AG04449 (cell line): ENCODE measurements at regions of chr20 and their contacts with region 1.

Region 1: DNA sequence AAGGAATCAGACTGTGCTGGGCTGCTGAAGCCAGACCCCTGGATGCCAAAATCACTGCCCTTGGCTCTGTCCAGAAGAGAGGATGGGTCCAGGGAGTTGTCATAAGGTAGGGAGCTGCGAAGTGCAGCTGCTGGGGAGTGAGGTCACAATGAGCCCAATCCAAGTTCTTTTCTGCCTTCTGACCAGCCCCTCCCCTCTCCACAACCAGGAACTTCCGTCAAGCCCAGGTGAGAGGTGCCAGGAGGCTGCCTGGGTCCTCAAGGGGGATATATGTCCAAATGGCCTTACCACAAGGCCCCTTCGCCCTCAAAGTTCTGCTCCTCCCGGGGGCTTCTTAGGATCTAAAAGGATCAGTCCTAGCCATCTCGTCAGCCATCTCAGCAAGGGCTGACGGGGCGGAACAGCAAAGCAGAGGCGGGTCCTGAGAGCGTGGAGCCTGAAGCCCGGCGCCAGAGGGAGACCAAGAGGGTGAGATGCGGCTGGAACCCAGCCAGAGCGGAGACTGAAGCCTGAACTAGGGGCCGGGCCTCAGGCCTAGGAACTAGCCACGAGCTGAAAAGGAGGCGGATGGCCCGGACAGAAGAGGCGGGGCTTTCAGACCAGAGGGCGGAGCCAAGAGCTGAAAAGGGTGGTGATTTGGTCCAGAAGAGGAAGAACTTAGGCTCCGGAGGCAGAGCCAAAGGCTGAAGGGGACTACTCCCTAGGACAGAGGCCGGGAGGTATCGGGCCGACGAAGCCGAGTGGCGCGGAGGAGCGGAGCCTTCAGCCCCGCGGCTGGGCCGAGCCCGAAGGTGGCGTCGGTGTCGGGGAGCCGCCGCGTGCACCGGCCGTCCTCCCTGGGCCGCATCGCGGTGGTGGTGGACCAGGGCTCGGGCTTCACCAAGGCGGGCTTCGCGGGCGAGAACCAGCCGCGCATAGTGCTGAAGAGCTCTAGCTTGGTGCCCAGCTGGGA is at the start of gene ACTL10:
- DNase-seq: peak; percentile 79
- H3K4me3 ChIP-seq: peak within 1 kb of the TSS; percentile 58
- CTCF ChIP-seq: peak; percentile 66

Region 2: DNA sequence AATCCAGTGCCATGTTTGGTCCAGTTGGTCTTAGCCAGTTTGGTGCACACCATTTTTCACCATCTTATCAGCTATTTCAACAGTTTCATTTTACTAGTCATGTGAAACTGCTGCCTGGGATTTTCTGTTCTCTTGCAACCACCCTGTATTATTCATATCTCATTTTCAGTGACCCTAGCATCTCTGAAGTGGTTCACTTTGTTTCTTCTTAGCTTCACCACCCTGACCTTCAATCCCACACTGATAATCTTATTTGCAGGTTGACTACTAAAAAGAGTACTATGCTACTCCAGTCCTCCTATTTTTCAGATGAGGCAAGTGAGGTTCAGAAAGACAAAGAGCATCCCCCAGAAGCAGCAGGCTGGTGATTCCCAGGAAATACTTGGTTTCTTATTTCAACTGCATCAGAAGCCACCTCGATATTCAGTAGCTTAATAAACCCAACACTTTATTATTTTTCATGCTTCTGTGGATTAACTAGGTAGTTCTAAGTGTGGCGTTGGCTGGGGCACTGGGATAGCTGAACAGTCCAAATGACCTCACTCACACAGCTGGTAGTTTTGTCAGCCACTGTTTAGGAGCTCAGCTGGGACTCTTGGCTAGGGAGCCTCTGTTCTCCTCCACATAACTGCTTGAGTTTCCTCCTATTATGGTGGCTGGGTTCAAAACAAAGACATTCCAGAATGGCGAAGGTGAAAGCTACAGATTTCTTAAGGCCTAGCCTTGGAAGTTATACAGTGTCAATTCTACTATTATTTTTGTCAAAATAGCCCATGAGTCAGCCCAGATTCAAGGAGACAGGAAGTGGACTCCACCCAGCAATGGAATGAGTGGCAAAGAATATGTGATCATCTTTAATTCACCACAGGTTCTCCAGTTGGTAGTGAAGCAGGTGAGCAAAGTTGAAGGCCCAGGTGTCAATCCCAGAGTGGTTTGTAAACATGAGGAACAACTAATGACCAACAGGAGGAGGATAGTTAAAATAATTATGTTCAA is 546.5 kb before region 1 on chr20:
- CTCF ChIA-PET with region 1: no interaction called
- POLR2A ChIA-PET with region 1: no interaction called
- DNase-seq: no peak
- H3K4me3 ChIP-seq: no peak overlapping the region
- CTCF ChIP-seq: no peak

Region 3: GRCh38 chr20:33415948-33416347 is 250.6 kb before region 1 on chr20:
- CTCF ChIA-PET with region 1: interaction called, 12 read pairs
- POLR2A ChIA-PET with region 1: no interaction called
- DNase-seq: no peak
- H3K4me3 ChIP-seq: no peak overlapping the region
- CTCF ChIP-seq: peak; percentile 45

Region 4: DNA sequence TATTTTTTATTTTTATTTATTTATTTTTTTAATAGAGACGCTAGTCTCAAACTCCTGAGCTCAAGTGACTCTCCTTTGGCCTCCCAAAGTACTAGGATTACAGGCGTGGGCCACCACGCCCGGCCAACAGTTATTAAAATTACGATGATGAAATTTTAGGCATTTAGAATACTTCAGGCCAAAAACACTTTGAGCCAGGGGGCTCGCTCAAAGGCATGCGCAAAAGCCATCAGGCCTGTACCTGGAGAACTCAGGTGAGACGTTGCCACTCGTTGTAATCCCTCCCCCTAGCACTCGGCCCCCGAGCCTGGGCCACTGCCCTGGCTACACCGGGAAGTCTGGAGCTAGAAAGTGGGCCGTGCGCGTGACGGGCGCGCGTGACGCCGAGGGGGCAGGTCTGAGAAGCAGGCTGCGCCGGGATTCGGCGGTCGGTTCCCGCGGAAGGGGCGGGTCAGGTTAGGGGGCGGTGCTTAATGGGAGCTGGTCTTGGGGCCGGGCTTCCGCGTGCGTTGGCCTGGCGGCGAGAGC is 177.0 kb before region 1 on chr20:
- CTCF ChIA-PET with region 1: interaction called, 11 read pairs
- POLR2A ChIA-PET with region 1: interaction called, 3 read pairs
- DNase-seq: peak; percentile 69
- H3K4me3 ChIP-seq: peak overlapping the region; percentile 72
- CTCF ChIP-seq: no peak

Region 5: GRCh38 chr20:33679758-33680485 is 13.4 kb after region 1 on chr20:
- CTCF ChIA-PET with region 1: interaction called, 40 read pairs
- POLR2A ChIA-PET with region 1: interaction called, 10 read pairs
- DNase-seq: no peak
- H3K4me3 ChIP-seq: no peak overlapping the region
- CTCF ChIP-seq: no peak

Region 6: DNA sequence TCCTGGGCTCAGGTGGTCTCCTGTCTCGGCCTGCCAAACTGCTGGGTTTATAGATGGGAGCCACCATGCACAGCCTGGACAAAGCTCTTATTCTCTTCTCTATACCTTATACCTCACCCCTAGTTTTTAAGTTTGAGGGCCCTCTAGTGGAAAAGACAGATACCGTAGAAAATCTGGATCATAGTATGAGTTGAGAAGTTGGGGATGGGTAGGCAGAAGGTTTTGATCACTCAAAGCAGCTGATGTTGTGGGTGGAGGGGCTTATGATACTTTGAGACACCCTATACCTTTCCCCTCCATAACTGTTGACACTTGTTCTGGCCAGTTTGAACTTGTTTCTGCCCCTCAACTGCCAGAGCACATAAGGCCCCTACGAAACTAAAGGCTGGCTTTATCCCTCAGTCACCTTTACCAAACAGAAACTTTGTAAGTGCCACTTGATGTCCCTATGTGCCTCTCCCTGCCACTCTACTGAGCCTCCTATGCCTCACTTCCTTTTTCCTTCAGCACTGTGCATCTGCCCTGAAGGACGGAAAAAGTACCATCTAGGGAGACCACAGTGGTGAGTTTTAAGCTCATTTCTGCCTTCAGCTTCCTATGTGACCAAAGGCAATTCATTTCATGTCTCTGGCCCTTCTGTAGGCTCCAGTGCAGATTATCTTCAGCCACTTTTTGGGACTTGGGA is 355.7 kb after region 1 on chr20:
- CTCF ChIA-PET with region 1: no interaction called
- POLR2A ChIA-PET with region 1: no interaction called
- DNase-seq: no peak
- H3K4me3 ChIP-seq: no peak overlapping the region
- CTCF ChIP-seq: peak; percentile 19

Region 7: GRCh38 chr20:34069341-34070078 is 402.9 kb after region 1 on chr20:
- CTCF ChIA-PET with region 1: interaction called, 11 read pairs
- POLR2A ChIA-PET with region 1: no interaction called
- DNase-seq: no peak
- H3K4me3 ChIP-seq: no peak overlapping the region
- CTCF ChIP-seq: peak; percentile 70